H1 (cell line): ENCODE measurements at regions of chr15 and their contacts with region 1.

Region 1: DNA sequence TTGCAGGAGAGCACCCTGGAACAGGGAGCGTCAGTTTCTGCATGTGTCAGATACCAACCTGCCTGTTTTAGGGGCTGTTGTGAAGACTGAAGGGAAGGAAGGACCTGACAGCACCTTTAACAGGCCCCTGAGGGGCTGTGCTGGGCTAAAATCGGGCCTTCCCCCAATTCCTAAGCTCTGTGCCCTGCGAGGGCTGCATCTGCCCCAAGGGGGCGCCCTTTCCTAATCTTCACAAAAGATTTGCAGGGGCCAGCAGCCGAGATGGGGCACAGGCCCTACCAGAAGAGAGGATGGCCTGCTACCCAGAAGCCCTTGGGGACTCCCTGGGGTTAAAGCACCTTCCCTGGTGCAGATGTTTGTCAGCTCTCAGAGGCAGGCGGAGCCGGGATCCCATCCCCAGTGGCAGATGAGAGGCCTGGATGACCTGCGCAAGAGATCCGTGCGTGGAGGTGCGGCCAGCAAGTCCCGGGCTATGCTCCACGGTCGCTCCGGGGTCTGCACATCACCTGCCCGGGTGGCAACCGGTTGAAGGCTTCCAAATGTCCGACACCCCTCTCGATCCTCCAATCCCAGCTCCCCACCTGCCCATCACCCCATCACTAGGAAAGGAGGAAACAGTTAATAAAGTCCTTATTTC is 53.6 kb downstream of the RHCG start:
- DNase-seq: peak; percentile 53 to 98
- H3K4me3 ChIP-seq: no peak overlapping the region
- H3K27ac ChIP-seq: no peak overlapping the region
- H3K4me1 ChIP-seq: peaks cover 2 to 18% (median 13%) of the 10 kb centered on the region in 4 experiments
- H3K27me3 ChIP-seq: peaks cover 0 to 2% (median 0%) of the 10 kb centered on the region in 4 experiments; a peak in 3 of 7 replicates
- CTCF ChIP-seq: peak; percentile 77 to 90 (median 80)
- EP300 ChIP-seq: no peak
- POLR2A ChIP-seq: no peak
- RAD21 ChIP-seq: peak; percentile 84 to 91

Region 2: GRCh38 chr15:88974392-88974791 is 468.4 kb before region 1 on chr15:
- CTCF ChIA-PET with region 1: no interaction called
- POLR2A ChIA-PET with region 1: no interaction called
- DNase-seq: no peak
- H3K4me3 ChIP-seq: no peak overlapping the region
- H3K27ac ChIP-seq: no peak overlapping the region
- H3K4me1 ChIP-seq: peaks cover 0 to 4% (median 3%) of the 10 kb centered on the region in 4 experiments; a peak in 5 of 7 replicates
- H3K27me3 ChIP-seq: no peaks in the 10 kb centered on the region
- CTCF ChIP-seq: no peak
- EP300 ChIP-seq: no peak
- POLR2A ChIP-seq: no peak
- RAD21 ChIP-seq: no peak

Region 3: GRCh38 chr15:89367485-89368451 is 75.0 kb before region 1 on chr15:
- CTCF ChIA-PET with region 1: interaction called, 271 read pairs
- POLR2A ChIA-PET with region 1: no interaction called
- DNase-seq: peak in 1 of 2 experiments; percentile 88
- H3K4me3 ChIP-seq: peak overlapping the region in 3 of 4 experiments; percentile 14 to 50 (median 29); a peak in 5 of 8 replicates
- H3K27ac ChIP-seq: no peak overlapping the region
- H3K4me1 ChIP-seq: peaks cover 3 to 32% (median 19%) of the 10 kb centered on the region in 4 experiments
- H3K27me3 ChIP-seq: peaks cover 98 to 100% (median 100%) of the 10 kb centered on the region in 4 experiments
- CTCF ChIP-seq: no peak
- EP300 ChIP-seq: no peak
- POLR2A ChIP-seq: no peak
- RAD21 ChIP-seq: no peak

Region 4: GRCh38 chr15:89378296-89379151 is 64.3 kb before region 1 on chr15:
- CTCF ChIA-PET with region 1: interaction called, 10 read pairs
- POLR2A ChIA-PET with region 1: no interaction called
- DNase-seq: peak in 1 of 2 experiments; percentile 74
- H3K4me3 ChIP-seq: peak overlapping the region; percentile 32 to 55 (median 41)
- H3K27ac ChIP-seq: no peak overlapping the region
- H3K4me1 ChIP-seq: peaks cover 18 to 37% (median 30%) of the 10 kb centered on the region in 4 experiments
- H3K27me3 ChIP-seq: peaks cover 92 to 100% (median 98%) of the 10 kb centered on the region in 4 experiments
- CTCF ChIP-seq: no peak
- EP300 ChIP-seq: no peak
- POLR2A ChIP-seq: no peak
- RAD21 ChIP-seq: no peak

Region 5: DNA sequence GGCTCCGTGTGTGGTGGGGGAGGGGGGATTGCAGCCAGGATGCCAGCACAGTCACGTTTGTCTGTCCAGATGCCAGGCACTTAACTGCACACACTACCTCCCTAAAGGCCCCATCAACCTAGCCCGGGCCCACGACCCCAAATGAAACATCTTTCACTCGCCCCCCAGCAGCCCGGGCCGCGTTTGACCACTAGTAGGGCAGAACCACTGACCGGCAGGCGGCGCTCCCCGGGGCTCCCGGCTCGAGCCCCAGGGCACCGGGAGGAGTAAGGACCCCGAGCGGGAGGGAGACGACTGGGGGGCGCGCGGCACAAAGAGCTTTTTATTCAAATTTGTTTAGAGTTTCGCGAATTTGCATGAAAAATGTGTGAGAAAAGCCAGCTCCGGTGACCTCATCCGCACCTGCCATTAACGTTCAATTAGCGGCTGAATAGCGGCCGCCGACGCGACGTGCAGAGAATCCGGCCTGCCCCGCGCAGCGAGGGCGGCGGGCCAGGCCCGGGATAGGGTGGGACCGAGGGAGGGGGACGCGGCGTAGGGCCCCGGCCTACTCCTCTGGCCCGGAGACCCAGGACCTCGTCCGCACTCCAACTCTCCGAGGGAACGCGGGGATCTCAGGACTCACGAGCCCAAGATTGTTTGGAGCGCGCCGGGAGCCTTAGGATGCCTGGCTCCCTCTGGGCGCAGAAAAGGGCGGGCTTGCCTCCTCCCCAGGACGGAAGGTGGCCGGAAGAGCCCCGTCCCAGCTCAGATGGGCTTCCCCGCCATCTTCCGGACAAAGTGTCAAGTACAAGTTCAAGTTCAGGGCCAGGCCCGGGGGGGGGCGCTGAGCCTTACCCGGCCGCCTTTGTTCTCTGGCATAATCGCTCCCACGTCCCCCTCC is 43.3 kb before region 1 on chr15:
- CTCF ChIA-PET with region 1: interaction called, 10 read pairs
- POLR2A ChIA-PET with region 1: interaction called, 4 read pairs
- DNase-seq: no peak
- H3K4me3 ChIP-seq: peak overlapping the region in 3 of 4 experiments; percentile 28 to 54 (median 33); a peak in 5 of 8 replicates
- H3K27ac ChIP-seq: no peak overlapping the region
- H3K4me1 ChIP-seq: peaks cover 5 to 45% (median 19%) of the 10 kb centered on the region in 4 experiments
- H3K27me3 ChIP-seq: peaks cover 93 to 99% (median 99%) of the 10 kb centered on the region in 4 experiments
- CTCF ChIP-seq: peak; percentile 52 to 74 (median 67)
- EP300 ChIP-seq: no peak
- POLR2A ChIP-seq: no peak
- RAD21 ChIP-seq: peak in 1 of 2 experiments; percentile 34; a peak in 2 of 4 replicates

Region 6: GRCh38 chr15:89430530-89431341 is 12.1 kb before region 1 on chr15:
- CTCF ChIA-PET with region 1: interaction called, 385 read pairs
- POLR2A ChIA-PET with region 1: interaction called, 3 read pairs
- DNase-seq: peak in 1 of 2 experiments; percentile 100
- H3K4me3 ChIP-seq: peak overlapping the region in 3 of 4 experiments; percentile 29 to 54 (median 41); a peak in 7 of 8 replicates
- H3K27ac ChIP-seq: no peak overlapping the region
- H3K4me1 ChIP-seq: peaks cover 0 to 9% (median 2%) of the 10 kb centered on the region in 4 experiments; a peak in 3 of 7 replicates
- H3K27me3 ChIP-seq: peaks cover 0 to 22% (median 13%) of the 10 kb centered on the region in 4 experiments; a peak in 6 of 7 replicates
- CTCF ChIP-seq: peak; percentile 97 to 99 (median 98)
- EP300 ChIP-seq: no peak
- POLR2A ChIP-seq: no peak
- RAD21 ChIP-seq: peak; percentile 84 to 90

Region 7: DNA sequence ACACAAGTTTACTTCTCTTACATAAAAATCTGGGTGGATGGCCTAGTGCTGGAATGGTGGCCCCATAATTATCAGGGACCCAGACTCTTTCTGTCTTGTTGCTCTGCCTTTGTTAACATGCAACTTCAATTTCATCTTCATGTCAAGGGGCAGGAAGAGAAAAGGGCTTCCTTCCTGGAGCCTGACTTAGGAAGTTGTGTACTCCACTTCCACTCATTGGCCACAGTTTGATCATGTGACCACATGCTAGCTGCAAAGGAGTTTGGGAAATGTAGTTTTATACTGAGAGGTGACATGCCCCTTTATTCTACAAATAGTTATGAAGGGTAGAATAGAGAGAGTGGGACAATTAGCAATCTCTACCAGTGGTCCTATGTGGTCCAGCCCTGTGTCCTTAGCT is 14.3 kb after region 1 on chr15:
- CTCF ChIA-PET with region 1: interaction called, 218 read pairs
- POLR2A ChIA-PET with region 1: interaction called, 4 read pairs
- DNase-seq: no peak
- H3K4me3 ChIP-seq: no peak overlapping the region
- H3K27ac ChIP-seq: no peak overlapping the region
- H3K4me1 ChIP-seq: peaks cover 4 to 14% (median 9%) of the 10 kb centered on the region in 4 experiments
- H3K27me3 ChIP-seq: peaks cover 0 to 29% (median 23%) of the 10 kb centered on the region in 4 experiments; a peak in 4 of 7 replicates
- CTCF ChIP-seq: no peak
- EP300 ChIP-seq: no peak
- POLR2A ChIP-seq: no peak
- RAD21 ChIP-seq: no peak

Region 8: GRCh38 chr15:89556413-89557262 is 113.8 kb after region 1 on chr15:
- CTCF ChIA-PET with region 1: interaction called, 19 read pairs
- POLR2A ChIA-PET with region 1: no interaction called
- DNase-seq: peak; percentile 39 to 78
- H3K4me3 ChIP-seq: no peak overlapping the region
- H3K27ac ChIP-seq: no peak overlapping the region
- H3K4me1 ChIP-seq: no peaks in the 10 kb centered on the region
- H3K27me3 ChIP-seq: no peaks in the 10 kb centered on the region
- CTCF ChIP-seq: peak in 2 of 3 experiments; percentile 74 to 77; a peak in 3 of 4 replicates
- EP300 ChIP-seq: no peak
- POLR2A ChIP-seq: no peak
- RAD21 ChIP-seq: peak; percentile 68 to 77